PC-9 (cell line): ENCODE measurements at regions of chr3 and their contacts with region 1.

Region 1: GRCh38 chr3:45656575-45657363 is 32.4 kb upstream of the SACM1L start:
- DNase-seq: peak; percentile 84 to 85
- H3K4me3 ChIP-seq: no peak overlapping the region
- H3K27ac ChIP-seq: peak overlapping the region; percentile 43; the same call in 1 of the 2 replicates
- H3K4me1 ChIP-seq: peaks cover 10% of the 10 kb centered on the region
- H3K27me3 ChIP-seq: no peaks in the 10 kb centered on the region
- CTCF ChIP-seq: peak; percentile 89

Region 2: DNA sequence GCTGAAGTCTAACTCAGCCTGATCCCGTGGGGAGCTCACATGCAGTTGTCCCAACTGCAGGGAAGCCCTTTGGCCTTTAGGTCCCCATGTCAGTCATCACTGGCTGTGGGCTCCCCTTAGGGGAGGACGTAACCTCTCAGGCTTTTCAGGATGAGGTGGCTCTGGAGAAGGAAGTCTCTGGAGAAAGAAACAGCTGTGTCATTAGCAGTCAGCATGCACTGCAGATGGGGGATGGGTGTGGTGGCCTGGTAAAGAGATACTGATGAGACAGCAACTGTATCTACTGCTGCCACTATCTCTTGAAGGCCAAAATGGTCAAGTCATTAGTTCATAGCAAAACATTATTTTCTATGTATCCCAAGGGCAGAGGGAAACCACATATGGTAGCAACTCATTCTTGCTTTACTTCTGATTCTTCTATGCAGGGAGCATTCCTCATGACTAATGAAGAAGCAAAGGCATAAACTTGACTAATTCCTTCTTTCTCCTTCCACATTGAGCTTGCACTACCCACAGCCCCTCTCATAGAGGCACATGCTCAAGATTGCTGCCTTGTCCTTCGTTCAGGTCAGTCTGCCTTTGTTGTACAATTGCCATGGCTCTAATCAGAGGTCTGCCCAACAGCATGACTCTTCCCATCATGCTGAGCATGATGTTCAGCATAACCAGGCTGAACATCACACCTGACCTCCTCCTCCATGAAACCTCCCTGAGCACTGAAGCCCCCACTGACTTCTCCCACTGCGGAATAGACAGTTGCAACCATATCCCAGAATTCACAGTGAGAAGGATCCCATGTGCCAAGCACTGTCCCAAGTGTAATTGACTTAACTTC is 382.9 kb before region 1 on chr3:
- CTCF ChIA-PET with region 1: no interaction called
- POLR2A ChIA-PET with region 1: no interaction called
- intact Hi-C with region 1: no loop called
- DNase-seq: peak; percentile 25 to 48
- H3K4me3 ChIP-seq: no peak overlapping the region
- H3K27ac ChIP-seq: peak overlapping the region; percentile 83
- H3K4me1 ChIP-seq: peaks cover 29% of the 10 kb centered on the region
- H3K27me3 ChIP-seq: no peaks in the 10 kb centered on the region
- CTCF ChIP-seq: no peak

Region 3: GRCh38 chr3:45496555-45496954 is 160.2 kb before region 1 on chr3:
- CTCF ChIA-PET with region 1: no interaction called
- POLR2A ChIA-PET with region 1: no interaction called
- intact Hi-C with region 1: no loop called
- DNase-seq: no peak
- H3K4me3 ChIP-seq: no peak overlapping the region
- H3K27ac ChIP-seq: no peak overlapping the region
- H3K4me1 ChIP-seq: no peaks in the 10 kb centered on the region
- H3K27me3 ChIP-seq: no peaks in the 10 kb centered on the region
- CTCF ChIP-seq: no peak

Region 4: GRCh38 chr3:45507820-45508317 is 148.9 kb before region 1 on chr3:
- CTCF ChIA-PET with region 1: interaction called, 9 read pairs
- POLR2A ChIA-PET with region 1: no interaction called
- intact Hi-C with region 1: loop called (anchors 1 kb)
- DNase-seq: no peak
- H3K4me3 ChIP-seq: no peak overlapping the region
- H3K27ac ChIP-seq: no peak overlapping the region
- H3K4me1 ChIP-seq: no peaks in the 10 kb centered on the region
- H3K27me3 ChIP-seq: no peaks in the 10 kb centered on the region
- CTCF ChIP-seq: no peak

Region 5: DNA sequence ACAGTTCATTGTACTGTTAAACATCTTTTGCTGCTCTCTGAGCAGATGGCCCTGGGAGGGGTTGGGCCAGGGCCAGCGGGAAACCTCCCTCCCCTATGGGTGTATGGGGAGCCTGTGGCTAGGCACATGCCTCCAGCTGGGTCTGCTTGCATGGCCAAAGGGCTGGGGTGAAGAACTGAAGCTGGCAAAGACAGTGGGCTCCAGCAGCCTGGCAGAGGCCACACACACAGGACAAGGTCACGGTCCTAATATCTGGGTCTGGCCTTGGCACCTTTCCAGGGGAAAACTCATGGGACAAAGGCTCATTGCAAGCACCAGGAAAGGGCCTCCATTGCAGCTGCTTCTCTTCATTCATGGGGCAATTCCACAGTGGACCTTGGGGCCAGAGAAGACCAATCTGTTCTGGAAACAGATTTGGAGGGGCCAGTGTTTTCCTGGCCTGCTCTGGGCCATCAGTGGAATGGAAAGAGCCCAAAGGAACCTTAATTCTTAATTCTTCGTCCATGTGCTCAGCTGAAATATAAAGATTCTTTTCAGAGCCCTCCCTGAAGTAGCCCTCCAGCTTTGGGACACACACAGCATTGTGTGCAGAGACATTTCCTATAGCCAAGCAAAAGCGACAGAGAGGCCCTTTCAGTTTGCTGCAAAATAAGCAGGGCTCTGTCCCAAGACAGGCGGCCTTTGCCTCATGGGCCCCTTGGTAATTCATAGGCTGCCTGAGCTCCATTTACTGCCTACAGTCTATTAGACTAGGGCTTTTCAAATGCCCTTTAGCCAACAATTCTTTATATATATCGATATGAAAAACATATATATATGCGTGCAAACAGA is 73.5 kb before region 1 on chr3:
- CTCF ChIA-PET with region 1: interaction called, 14 read pairs
- POLR2A ChIA-PET with region 1: no interaction called
- intact Hi-C with region 1: no loop called
- DNase-seq: no peak
- H3K4me3 ChIP-seq: no peak overlapping the region
- H3K27ac ChIP-seq: no peak overlapping the region
- H3K4me1 ChIP-seq: no peaks in the 10 kb centered on the region
- H3K27me3 ChIP-seq: no peaks in the 10 kb centered on the region
- CTCF ChIP-seq: no peak

Region 6: GRCh38 chr3:45599424-45599886 is 57.3 kb before region 1 on chr3:
- CTCF ChIA-PET with region 1: interaction called, 7 read pairs
- POLR2A ChIA-PET with region 1: interaction called, 11 read pairs
- intact Hi-C with region 1: no loop called
- DNase-seq: no peak
- H3K4me3 ChIP-seq: no peak overlapping the region
- H3K27ac ChIP-seq: no peak overlapping the region
- H3K4me1 ChIP-seq: peaks cover 39% of the 10 kb centered on the region
- H3K27me3 ChIP-seq: no peaks in the 10 kb centered on the region
- CTCF ChIP-seq: no peak